ENCODE measurements at regions of chr10 and their contacts with region 1.

Region 1: GRCh38 chr10:3757638-3758490 is 27.1 kb downstream of the KLF6 start:
- DNase-seq: peak in 4 of 5 donors; percentile 56 to 83 (median 59)
- H3K4me3 ChIP-seq: no peak overlapping the region
- H3K4me3 Mint-ChIP-seq: peak overlapping the region; percentile 9 to 92 (median 81)
- H3K27ac ChIP-seq: peak overlapping the region; percentile 66
- H3K27ac Mint-ChIP-seq: peak overlapping the region; percentile 93 to 100 (median 98)
- H3K4me1 ChIP-seq: peaks cover 36% of the 10 kb centered on the region
- H3K4me1 Mint-ChIP-seq: peaks cover 42 to 82% (median 60%) of the 10 kb centered on the region in 3 donors
- H3K27me3 ChIP-seq: no peaks in the 10 kb centered on the region
- H3K27me3 Mint-ChIP-seq: no peaks in the 10 kb centered on the region

Region 2: GRCh38 chr10:3727268-3727667 is 30.6 kb before region 1 on chr10:
- CTCF ChIA-PET with region 1: no interaction called
- POLR2A ChIA-PET with region 1: no interaction called
- DNase-seq: no peak
- H3K4me3 ChIP-seq: no peak overlapping the region
- H3K4me3 Mint-ChIP-seq: no peak overlapping the region
- H3K27ac ChIP-seq: no peak overlapping the region
- H3K27ac Mint-ChIP-seq: no peak overlapping the region
- H3K4me1 ChIP-seq: no peaks in the 10 kb centered on the region
- H3K4me1 Mint-ChIP-seq: no peaks in the 10 kb centered on the region
- H3K27me3 ChIP-seq: no peaks in the 10 kb centered on the region
- H3K27me3 Mint-ChIP-seq: peaks cover 4 to 8% of the 10 kb centered on the region in 2 donors

Region 3: DNA sequence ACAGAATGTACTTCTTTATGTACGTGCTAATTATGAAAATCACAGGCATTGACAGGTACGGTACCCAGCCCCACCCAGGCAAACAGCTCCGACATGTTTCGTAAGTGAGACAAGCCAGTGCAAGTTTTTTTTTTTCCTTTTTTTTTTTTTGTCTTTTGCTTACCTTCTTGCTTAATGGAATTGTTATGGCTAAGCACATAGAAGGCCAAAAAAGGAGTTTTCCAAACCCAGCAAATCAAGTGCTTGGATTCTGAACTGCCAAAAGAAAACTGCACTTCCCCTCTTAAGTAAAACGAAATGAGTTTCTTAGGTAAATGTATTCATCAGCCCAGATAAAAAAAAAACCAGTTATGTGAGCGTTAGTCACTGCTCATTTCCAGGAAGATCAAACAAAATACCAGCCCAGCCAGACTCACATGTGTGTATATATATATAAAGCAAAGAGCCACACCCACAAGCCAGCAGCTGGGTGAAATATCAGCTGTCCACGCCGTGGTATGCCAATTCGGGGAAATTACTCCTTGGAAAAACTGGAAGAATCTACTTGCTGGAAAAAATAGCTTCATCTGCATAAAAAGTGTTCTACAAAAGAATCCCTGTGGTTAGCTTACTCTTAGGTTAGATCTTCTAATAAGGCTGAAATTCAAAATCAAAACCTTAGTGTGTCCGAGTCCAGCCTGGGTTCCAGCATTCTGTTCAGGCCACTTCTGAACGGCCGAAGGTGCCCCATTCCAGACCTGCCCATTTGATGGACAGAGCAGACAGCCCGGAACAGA is 19.1 kb after region 1 on chr10:
- CTCF ChIA-PET with region 1: interaction called, 9 read pairs
- POLR2A ChIA-PET with region 1: interaction called, 13 read pairs
- DNase-seq: peak in 4 of 5 donors; percentile 44 to 81 (median 66)
- H3K4me3 ChIP-seq: peak overlapping the region; percentile 12
- H3K4me3 Mint-ChIP-seq: peak overlapping the region; percentile 54 to 93 (median 63)
- H3K27ac ChIP-seq: peak overlapping the region; percentile 39
- H3K27ac Mint-ChIP-seq: peak overlapping the region; percentile 77 to 99 (median 86)
- H3K4me1 ChIP-seq: peaks cover 68% of the 10 kb centered on the region
- H3K4me1 Mint-ChIP-seq: peaks cover 71 to 91% (median 79%) of the 10 kb centered on the region in 3 donors
- H3K27me3 ChIP-seq: no peaks in the 10 kb centered on the region
- H3K27me3 Mint-ChIP-seq: peaks cover 0 to 17% of the 10 kb centered on the region in 2 donors

Measured in CD8-positive, alpha-beta memory T cell (primary cell).